Posterior vena cava (tissue), 2 donors: ENCODE measurements at regions of chr7 and their contacts with region 1.

Region 1: GRCh38 chr7:79290841-79291497 is 162.5 kb downstream of the MAGI2 start:
- DNase-seq: no peak

Region 2: DNA sequence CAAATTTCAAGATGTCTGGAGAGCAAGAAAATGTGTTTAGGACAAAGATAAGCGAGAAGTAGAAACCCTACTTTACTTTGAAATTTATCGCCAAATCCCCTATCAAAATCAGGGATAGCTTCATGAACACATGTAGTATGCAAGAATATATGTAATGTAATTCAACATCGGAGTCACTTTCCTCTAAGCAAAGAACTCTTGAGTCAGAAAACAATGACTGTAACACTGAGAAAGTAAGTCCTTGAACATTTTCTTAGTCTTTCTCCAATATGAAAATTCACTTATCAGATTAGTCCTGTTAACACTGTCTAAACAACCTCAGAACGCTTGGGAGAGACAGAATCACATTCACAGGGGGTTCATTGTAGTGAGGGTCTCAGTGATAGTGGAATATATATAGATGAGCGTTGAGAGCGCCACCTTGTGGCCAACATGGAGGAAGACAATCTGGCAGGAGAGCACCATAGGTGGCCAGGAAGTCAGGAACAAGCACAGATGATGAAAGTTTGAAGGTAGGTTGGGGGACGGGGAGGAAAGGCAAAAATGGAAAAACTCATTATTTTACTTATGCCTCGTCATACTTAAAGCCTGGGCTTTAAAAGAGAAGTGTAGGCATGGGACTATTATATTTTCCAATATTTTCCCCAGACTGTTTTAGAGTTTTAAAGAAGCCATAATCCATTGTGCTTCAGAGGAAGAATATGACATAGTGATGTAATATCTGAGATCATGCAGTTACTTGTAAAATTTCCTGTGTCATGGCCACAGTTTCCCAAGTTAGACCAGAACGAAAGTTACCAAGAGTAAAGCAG is 728.2 kb after region 1 on chr7:
- intact Hi-C with region 1: loop called in 1 of 2 experiments (anchors 5 kb)
- DNase-seq: no peak

Region 3: GRCh38 chr7:80172387-80172786 is 881.4 kb after region 1 on chr7:
- intact Hi-C with region 1: no loop called
- DNase-seq: no peak